Motor neuron (in vitro differentiated cells): ENCODE measurements at regions of chr9 and their contacts with region 1.

Region 1: DNA sequence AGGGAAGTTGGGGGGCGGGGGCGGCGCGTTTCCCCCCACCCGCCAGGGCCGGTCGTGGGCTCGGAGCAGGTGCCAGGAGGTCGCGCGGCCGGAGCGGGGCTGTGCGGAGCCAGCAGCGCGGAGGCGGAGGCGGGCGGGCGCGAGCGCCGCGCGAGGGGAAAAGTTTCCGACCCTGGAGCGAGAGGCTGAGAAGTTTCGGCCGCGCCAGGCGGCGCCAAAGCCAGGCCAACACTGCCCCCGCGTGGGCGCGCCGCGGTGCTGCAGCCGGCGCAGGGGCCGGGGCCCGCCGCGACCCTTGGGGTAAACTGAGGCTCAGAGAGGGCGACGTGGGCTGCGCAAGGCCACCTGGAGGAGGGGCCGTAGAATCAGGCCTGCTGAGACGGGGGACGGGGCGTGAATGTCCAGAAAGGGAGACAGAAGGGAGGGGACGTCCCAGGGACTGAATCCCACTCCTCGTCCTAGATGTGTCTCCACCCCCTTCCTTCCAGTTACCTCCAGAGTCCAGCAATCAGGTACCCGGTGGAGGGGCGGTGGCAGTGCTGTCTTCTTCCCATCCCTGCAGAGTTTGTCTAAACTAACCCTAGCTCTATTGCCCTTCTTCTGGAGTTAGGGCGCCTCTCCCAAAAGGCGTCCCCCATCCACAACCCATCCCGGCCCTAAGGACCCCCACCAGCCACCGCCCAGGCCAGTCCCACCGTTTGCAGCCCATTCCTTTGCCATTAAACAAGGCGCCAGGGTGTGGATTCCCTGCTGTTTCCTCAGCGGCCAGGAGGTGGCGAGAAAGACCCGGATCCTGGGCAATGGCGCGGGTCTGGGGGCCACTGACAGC is 10.2 kb downstream of the C9orf50 start:
- ATAC-seq: peak; percentile 10 to 68 (median 48)
- H3K4me3 ChIP-seq: peak overlapping the region; percentile 22 to 41 (median 29)
- H3K27ac ChIP-seq: peak overlapping the region in 1 of 2 donors; percentile 39
- H3K4me1 ChIP-seq: peaks cover 31 to 40% of the 10 kb centered on the region in 2 donors

Region 2: GRCh38 chr9:129139993-129140396 is 470.7 kb before region 1 on chr9:
- in situ Hi-C with region 1: loop called (anchors 10 to 25 kb)
- ATAC-seq: peak; percentile 58 to 79 (median 72)
- H3K4me3 ChIP-seq: peak overlapping the region in 3 of 5 donors; percentile 6 to 17 (median 9)
- H3K27ac ChIP-seq: peak overlapping the region; percentile 99 to 100
- H3K4me1 ChIP-seq: peaks cover 50 to 53% of the 10 kb centered on the region in 2 donors

Region 3: GRCh38 chr9:129177791-129178559 is 432.7 kb before region 1 on chr9 and contains the start of gene IER5L:
- in situ Hi-C with region 1: loop called in 1 of 9 experiments (anchors 10 kb)
- ATAC-seq: peak; percentile 65 to 86 (median 77)
- H3K4me3 ChIP-seq: peak within 1 kb of the TSS; percentile 68 to 78 (median 73)
- H3K27ac ChIP-seq: peak within 1 kb of the TSS; percentile 81
- H3K4me1 ChIP-seq: peaks cover 13 to 20% of the 10 kb centered on the region in 2 donors
- total RNA-seq, gene IER5L: 2.1 to 24.8 (median 13.9) TPM

Region 4: DNA sequence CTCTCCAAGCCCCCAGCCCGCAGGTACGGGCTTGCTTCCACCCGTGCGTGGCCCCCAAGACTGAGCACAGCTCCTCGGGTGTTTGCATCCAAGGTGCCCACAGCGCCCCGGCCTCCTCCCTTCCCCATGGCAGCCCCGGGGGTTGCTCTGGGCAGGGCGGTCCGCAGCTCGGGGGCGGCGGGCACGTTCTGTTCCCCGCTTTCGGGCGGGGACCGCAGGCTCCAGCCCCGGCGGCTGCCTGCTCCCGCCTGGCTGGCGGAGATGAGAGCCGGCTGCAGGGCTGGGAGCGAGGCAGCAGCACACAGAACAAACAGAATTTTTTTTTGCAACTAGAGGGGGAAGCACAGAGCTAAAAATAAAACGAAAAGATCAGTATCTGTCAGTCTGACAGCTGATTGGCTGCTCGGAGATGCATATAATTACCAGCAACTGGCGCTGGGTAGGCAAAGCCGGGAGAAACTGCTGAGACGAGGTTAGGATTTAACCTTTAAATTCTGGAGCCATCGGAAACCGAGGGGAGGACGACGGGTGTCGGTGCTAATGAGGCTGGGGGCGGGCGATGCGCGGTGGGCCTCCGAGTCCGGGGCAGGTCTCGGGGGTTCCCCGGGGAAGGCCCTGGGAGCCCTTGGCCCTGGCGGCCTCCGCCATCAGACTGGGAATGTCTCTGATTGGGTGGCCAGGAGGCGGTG is 290.0 kb before region 1 on chr9:
- in situ Hi-C with region 1: loop called in 1 of 9 experiments (anchors 25 kb)
- ATAC-seq: peak; percentile 85 to 95 (median 86)
- H3K4me3 ChIP-seq: peak overlapping the region in 1 of 5 donors; percentile 23
- H3K27ac ChIP-seq: peak overlapping the region; percentile 68 to 88
- H3K4me1 ChIP-seq: peaks cover 39 to 50% of the 10 kb centered on the region in 2 donors

Region 5: DNA sequence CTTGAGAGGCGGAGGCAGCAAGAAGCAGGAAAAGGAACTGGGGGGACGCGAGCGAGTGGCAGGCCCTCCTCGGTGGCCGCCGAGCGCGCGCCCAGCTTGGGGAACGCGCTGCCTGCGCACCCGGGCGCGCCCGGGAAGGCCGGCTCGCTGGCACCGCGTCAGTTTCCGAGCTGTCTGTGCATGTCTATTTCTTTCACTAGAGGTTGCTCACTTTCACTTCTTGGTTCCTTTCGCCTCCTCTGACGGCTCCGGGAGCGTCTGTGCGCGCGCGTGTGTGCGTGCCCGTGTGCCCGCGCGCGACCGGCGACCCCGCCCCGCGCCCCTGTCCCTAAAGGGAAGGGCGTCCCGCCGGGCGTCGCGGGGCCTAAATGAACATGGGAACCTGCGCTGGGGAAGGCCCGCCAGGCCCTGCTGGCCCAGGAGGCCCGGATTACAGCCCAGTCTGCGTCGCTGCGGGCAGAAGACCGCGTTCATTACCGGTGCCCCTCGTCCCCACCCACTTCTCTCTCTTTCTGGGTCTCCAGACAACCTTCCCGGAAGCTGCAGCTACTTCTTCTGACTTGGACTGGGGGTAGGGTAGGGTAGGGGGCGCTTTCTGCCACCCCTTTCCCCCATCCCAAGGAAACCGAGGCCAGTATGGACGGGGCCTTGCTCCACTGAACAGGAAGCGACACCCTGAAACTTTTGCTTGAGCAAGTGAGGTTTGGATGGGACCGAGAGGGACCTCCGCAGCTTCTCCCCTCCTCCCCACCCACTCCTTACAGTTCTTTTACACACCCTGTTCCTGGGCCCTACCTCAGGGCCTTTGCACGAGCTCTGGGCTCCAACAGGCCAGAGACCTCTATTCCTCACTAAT is 226.9 kb before region 1 on chr9:
- in situ Hi-C with region 1: loop called in 1 of 9 experiments (anchors 25 kb)
- ATAC-seq: peak; percentile 63 to 97 (median 77)
- H3K4me3 ChIP-seq: peak overlapping the region in 2 of 5 donors; percentile 5 to 12
- H3K27ac ChIP-seq: no peak overlapping the region
- H3K4me1 ChIP-seq: peaks cover 22 to 23% of the 10 kb centered on the region in 2 donors

Region 6: DNA sequence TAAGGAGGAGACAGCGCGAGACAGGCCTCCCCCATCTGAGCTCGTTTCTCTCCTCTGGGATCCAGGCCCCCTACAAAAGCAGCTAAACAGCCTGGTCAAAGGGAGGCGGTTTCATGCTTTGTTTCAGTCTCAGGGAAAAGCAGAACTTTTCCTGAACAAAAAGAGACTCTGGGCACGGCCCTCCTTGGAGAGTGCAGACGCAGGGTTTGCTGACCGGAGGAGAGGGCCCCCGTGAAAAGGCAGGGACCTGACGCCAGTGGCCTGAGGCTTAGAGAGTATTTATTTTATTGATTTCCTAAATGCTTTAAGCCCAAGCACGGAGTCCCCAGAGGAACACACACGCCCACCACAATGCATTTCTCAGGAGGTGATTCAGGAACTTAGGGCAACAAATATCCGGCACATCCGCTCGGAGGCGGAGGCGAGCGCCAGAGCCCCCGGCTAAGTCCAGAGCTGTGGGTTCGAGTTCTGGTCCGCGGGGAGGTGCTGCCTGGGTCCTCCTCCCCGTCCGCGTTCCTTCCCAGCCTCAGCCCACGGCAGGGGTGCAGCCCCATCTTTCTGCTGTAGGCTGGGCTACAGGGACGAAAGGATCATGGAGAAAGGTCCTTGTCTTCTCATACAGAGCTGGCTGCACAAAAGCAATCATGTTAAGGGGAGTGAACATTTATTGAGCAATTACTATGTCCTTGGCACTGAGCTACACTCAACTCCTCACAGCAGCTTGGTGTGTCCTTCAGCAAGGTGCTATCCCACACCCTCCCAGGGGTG is 102.1 kb after region 1 on chr9:
- in situ Hi-C with region 1: no loop called
- ATAC-seq: peak; percentile 15 to 73 (median 48)
- H3K4me3 ChIP-seq: no peak overlapping the region
- H3K27ac ChIP-seq: no peak overlapping the region
- H3K4me1 ChIP-seq: peaks cover 4 to 23% of the 10 kb centered on the region in 2 donors